MCF 10A (cell line): ENCODE measurements at regions of chr10 and their contacts with region 1.

Region 1: GRCh38 chr10:94362360-94363250 is at the start of gene NOC3L:
- DNase-seq: peak; percentile 95
- H3K4me3 Mint-ChIP-seq: peak within 1 kb of the TSS; percentile 95
- H3K27ac Mint-ChIP-seq: peak within 1 kb of the TSS; percentile 92
- H3K4me1 Mint-ChIP-seq: peaks cover 24% of the 10 kb centered on the region
- H3K27me3 Mint-ChIP-seq: no peaks in the 10 kb centered on the region
- CTCF ChIP-seq: peak; percentile 78
- total RNA-seq, gene NOC3L: 24.9 and 39.0 TPM in 2 replicates

Region 2: DNA sequence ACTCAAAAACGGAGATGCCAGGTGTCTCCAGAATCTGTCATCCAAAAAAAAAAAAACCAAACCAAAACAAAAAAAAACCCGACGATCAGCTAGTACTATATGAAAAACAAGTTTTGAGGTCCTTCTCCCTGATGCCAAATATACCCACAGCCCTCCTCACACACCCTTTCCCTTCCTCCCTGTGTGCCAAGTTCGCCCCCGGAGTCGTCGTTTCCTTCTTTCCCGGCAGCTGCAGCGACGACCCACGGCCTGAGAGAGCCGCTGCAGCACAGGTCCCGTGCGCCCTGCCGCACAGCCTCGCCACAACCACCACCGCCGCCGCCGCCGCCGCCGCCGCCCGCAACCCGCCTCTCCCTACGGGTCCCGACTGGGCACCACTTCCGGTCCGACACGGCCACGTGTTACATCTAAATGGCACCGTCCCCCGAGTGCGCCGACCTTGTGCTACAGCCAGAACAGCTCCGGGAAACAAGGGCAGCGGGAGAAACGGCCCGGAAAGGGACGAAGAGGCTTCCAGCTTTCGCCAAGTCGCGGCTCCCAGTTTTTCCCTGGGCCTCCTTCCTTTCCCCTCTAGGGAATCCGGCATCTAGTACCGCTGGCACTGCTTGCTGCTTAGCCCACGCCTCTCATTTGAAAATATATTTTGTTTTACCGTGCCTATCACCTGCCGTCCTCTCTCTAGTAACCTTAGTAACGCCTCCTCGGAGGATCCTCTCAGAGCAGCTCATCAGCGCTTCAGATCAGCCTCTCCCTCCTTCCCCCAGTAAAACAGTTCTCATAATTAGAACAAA is 660.2 kb before region 1 on chr10 and contains the start of gene FRA10AC1:
- CTCF ChIA-PET with region 1: no interaction called
- POLR2A ChIA-PET with region 1: interaction called, 10 read pairs
- intact Hi-C with region 1: no loop called
- DNase-seq: peak; percentile 90
- H3K4me3 Mint-ChIP-seq: no peak within 1 kb of the TSS
- H3K27ac Mint-ChIP-seq: no peak within 1 kb of the TSS
- H3K4me1 Mint-ChIP-seq: peaks cover 8% of the 10 kb centered on the region
- H3K27me3 Mint-ChIP-seq: no peaks in the 10 kb centered on the region
- CTCF ChIP-seq: peak; percentile 71
- total RNA-seq, gene FRA10AC1: 19.3 and 25.1 TPM in 2 replicates

Region 3: DNA sequence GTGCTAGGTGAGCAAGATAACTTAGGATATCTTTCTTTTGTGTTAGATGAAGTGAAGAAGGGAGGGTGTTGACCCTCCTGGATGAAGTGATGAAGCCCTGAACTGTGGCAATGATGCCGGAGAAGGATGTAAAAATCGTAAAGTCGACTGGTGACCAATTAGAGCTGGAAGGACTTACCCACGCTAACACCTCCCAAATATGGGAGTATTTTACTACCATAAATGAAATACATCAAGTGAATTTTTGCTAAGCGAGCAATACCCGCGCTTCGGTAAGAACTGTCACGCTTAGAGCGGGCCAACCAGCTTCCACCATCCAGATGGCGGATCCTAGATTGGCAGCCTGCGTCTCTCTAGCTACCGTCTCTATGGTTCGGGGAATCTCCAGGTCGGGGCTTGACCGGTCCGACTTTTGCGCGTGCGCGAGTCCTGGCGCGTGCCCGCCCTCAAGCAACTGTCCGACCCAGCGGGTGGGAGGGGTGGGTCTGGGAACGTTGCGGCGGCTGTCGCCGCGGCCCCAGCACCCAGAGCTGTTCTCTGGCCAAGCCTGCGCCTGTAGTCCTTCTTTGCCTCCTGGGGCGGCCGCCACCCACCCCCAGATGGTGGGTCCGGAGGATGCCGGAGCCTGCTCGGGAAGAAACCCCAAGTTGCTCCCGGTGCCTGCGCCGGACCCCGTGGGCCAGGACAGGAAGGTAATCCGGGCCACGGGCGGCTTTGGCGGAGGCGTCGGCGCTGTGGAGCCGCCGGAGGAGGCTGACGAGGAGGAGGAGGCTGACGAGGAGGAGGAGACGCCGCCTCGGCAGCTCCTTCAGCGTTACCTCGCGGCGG is 39.6 kb after region 1 on chr10 and contains the start of gene TBC1D12:
- CTCF ChIA-PET with region 1: interaction called, 24 read pairs
- POLR2A ChIA-PET with region 1: interaction called, 107 read pairs
- intact Hi-C with region 1: loop called (anchors 1 kb)
- DNase-seq: peak; percentile 95
- H3K4me3 Mint-ChIP-seq: peak within 1 kb of the TSS; percentile 88
- H3K27ac Mint-ChIP-seq: peak within 1 kb of the TSS; percentile 73
- H3K4me1 Mint-ChIP-seq: peaks cover 6% of the 10 kb centered on the region
- H3K27me3 Mint-ChIP-seq: no peaks in the 10 kb centered on the region
- CTCF ChIP-seq: no peak
- total RNA-seq, gene TBC1D12: 5.4 and 5.9 TPM in 2 replicates

Region 4: GRCh38 chr10:94412449-94412848 is 49.8 kb after region 1 on chr10:
- CTCF ChIA-PET with region 1: interaction called, 4 read pairs
- POLR2A ChIA-PET with region 1: interaction called, 20 read pairs
- intact Hi-C with region 1: no loop called
- DNase-seq: no peak
- H3K4me3 Mint-ChIP-seq: no peak overlapping the region
- H3K27ac Mint-ChIP-seq: no peak overlapping the region
- H3K4me1 Mint-ChIP-seq: peaks cover 13% of the 10 kb centered on the region
- H3K27me3 Mint-ChIP-seq: no peaks in the 10 kb centered on the region
- CTCF ChIP-seq: no peak

Region 5: GRCh38 chr10:94545391-94546048 is 182.9 kb after region 1 on chr10 and contains the start of gene HELLS:
- CTCF ChIA-PET with region 1: interaction called, 3 read pairs
- POLR2A ChIA-PET with region 1: interaction called, 3 read pairs
- intact Hi-C with region 1: loop called (anchors 1 kb)
- DNase-seq: peak; percentile 92
- H3K4me3 Mint-ChIP-seq: peak within 1 kb of the TSS; percentile 89
- H3K27ac Mint-ChIP-seq: peak within 1 kb of the TSS; percentile 70
- H3K4me1 Mint-ChIP-seq: peaks cover 6% of the 10 kb centered on the region
- H3K27me3 Mint-ChIP-seq: no peaks in the 10 kb centered on the region
- CTCF ChIP-seq: no peak
- total RNA-seq, gene HELLS: 12.1 and 31.4 TPM in 2 replicates